ENCODE measurements at regions of chr4 and their contacts with region 1.

Region 1: DNA sequence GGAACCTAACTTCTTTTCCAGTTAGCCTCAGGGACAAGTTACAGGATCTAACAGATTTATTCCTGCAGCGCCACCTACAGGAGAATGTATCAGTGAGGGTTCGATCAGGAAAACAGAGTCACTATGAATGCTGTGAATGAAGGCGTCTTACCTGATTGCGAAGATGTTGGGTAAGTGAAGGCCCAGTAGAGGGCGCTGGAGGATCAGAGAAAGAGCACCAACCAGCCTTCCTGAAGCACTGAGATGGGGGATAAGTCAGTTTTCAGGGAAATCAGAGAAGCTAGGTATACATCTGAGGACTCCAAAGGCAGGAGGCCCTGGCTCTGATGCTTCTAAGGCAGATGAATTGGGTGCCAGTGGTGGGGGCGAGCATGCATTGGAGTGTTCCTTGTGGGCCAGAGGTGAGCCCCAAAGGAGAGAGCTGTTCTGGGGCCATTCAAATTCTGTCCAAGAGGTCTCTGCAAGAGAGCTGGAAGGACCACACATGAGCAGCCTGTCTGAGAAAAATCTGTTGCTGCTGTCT is 169.9 kb upstream of the AADAT start:
- DNase-seq: peak; percentile 59
- H3K4me3 Mint-ChIP-seq: no peak overlapping the region
- H3K27ac Mint-ChIP-seq: no peak overlapping the region
- H3K4me1 Mint-ChIP-seq: no peaks in the 10 kb centered on the region
- H3K27me3 Mint-ChIP-seq: no peaks in the 10 kb centered on the region

Region 2: GRCh38 chr4:170270628-170271027 is 10.9 kb after region 1 on chr4:
- CTCF ChIA-PET with region 1: interaction called, 12 read pairs
- DNase-seq: no peak
- H3K4me3 Mint-ChIP-seq: no peak overlapping the region
- H3K27ac Mint-ChIP-seq: no peak overlapping the region
- H3K4me1 Mint-ChIP-seq: no peaks in the 10 kb centered on the region
- H3K27me3 Mint-ChIP-seq: no peaks in the 10 kb centered on the region

Region 3: DNA sequence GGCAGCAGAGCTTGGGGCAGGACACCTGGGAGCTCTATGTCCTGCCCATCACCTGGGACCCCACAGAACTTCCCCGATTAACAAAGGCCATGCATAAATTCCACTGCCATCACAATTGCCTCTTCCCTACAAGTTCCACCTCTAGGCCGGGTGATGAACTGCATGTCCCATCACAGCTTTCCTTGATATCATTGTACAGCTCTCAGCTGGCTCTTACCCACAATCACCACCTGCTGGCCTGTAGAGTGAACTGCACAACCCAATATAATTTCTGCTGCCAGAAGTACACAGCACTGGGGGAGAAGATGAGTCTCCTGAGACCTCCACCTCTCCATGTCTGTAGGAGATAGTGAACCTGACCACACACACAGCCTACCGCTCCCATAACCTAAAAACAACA is 115.1 kb after region 1 on chr4:
- CTCF ChIA-PET with region 1: interaction called, 16 read pairs
- DNase-seq: no peak
- H3K4me3 Mint-ChIP-seq: no peak overlapping the region
- H3K27ac Mint-ChIP-seq: no peak overlapping the region
- H3K4me1 Mint-ChIP-seq: no peaks in the 10 kb centered on the region
- H3K27me3 Mint-ChIP-seq: no peaks in the 10 kb centered on the region

Region 4: GRCh38 chr4:170853422-170854021 is 593.8 kb after region 1 on chr4:
- CTCF ChIA-PET with region 1: interaction called, 13 read pairs
- DNase-seq: peak; percentile 24
- H3K4me3 Mint-ChIP-seq: no peak overlapping the region
- H3K27ac Mint-ChIP-seq: no peak overlapping the region
- H3K4me1 Mint-ChIP-seq: no peaks in the 10 kb centered on the region
- H3K27me3 Mint-ChIP-seq: no peaks in the 10 kb centered on the region

Measured in activated naive CD4-positive, alpha-beta T cell treated with anti-CD3 and anti-CD28 coated beads, Interleukin-2, amount 10 ng/mL, durations not matched to agents 7 days and 5 days (primary cell).